ENCODE measurements at regions of chr11 and their contacts with region 1.

Region 1: DNA sequence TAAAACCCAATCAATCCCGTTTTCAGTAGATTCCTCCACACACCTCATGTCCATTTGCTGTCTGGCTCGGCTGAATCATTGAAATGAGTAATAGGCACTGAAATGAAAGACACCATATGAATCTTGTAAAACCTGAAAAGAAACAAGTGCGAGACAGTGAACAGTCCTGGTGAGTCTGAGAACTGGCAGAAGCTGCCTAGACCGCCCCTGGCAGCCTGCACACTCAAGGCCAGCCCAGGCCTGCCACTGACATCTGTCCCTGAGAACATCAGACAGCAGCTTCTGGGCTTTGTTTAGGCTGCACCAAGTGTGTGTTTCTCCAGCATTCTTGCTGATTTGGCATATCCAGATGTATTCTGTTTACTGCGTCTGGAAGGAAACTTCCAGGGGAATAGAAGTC is 44.8 kb downstream of the ENDOD1 start:
- DNase-seq: no peak
- ATAC-seq: no peak
- H3K4me3 ChIP-seq: no peak overlapping the region
- H3K4me3 Mint-ChIP-seq: no peak overlapping the region
- H3K27ac ChIP-seq: no peak overlapping the region
- H3K27ac Mint-ChIP-seq: no peak overlapping the region
- H3K4me1 ChIP-seq: no peaks in the 10 kb centered on the region
- H3K4me1 Mint-ChIP-seq: no peaks in the 10 kb centered on the region
- H3K27me3 ChIP-seq: no peaks in the 10 kb centered on the region
- H3K27me3 Mint-ChIP-seq: no peaks in the 10 kb centered on the region

Region 2: DNA sequence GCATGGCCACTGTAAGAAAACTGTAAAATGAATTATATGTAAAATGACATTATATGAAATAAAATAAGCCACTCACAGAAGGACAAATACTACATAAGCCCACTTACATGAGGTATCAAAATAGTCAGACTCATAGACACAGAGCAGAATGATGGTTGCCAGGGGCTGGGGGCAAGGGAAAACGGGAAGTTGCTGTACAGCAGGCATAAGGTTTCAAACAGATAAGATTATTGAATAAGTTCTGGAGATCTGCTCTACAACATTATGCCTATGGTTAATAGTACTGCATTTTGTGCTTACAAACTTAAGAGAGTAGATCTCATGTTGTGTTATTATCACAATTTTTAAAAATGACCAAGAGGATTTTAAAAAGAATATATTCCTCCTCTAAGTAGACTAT is 1146.0 kb before region 1 on chr11:
- CTCF ChIA-PET with region 1: no interaction called
- POLR2A ChIA-PET with region 1: no interaction called
- DNase-seq: no peak
- ATAC-seq: no peak
- H3K4me3 ChIP-seq: no peak overlapping the region
- H3K4me3 Mint-ChIP-seq: no peak overlapping the region
- H3K27ac ChIP-seq: no peak overlapping the region
- H3K27ac Mint-ChIP-seq: no peak overlapping the region
- H3K4me1 ChIP-seq: no peaks in the 10 kb centered on the region
- H3K4me1 Mint-ChIP-seq: no peaks in the 10 kb centered on the region
- H3K27me3 ChIP-seq: no peaks in the 10 kb centered on the region
- H3K27me3 Mint-ChIP-seq: peaks cover 4 to 11% of the 10 kb centered on the region in 2 donors

Region 3: GRCh38 chr11:95241681-95242081 is 107.2 kb after region 1 on chr11:
- CTCF ChIA-PET with region 1: no interaction called
- POLR2A ChIA-PET with region 1: no interaction called
- DNase-seq: no peak
- ATAC-seq: no peak
- H3K4me3 ChIP-seq: no peak overlapping the region
- H3K4me3 Mint-ChIP-seq: no peak overlapping the region
- H3K27ac ChIP-seq: no peak overlapping the region
- H3K27ac Mint-ChIP-seq: no peak overlapping the region
- H3K4me1 ChIP-seq: no peaks in the 10 kb centered on the region
- H3K4me1 Mint-ChIP-seq: peaks cover 0 to 6% (median 0%) of the 10 kb centered on the region in 3 donors
- H3K27me3 ChIP-seq: no peaks in the 10 kb centered on the region
- H3K27me3 Mint-ChIP-seq: peaks cover 2 to 3% of the 10 kb centered on the region in 2 donors

Region 4: DNA sequence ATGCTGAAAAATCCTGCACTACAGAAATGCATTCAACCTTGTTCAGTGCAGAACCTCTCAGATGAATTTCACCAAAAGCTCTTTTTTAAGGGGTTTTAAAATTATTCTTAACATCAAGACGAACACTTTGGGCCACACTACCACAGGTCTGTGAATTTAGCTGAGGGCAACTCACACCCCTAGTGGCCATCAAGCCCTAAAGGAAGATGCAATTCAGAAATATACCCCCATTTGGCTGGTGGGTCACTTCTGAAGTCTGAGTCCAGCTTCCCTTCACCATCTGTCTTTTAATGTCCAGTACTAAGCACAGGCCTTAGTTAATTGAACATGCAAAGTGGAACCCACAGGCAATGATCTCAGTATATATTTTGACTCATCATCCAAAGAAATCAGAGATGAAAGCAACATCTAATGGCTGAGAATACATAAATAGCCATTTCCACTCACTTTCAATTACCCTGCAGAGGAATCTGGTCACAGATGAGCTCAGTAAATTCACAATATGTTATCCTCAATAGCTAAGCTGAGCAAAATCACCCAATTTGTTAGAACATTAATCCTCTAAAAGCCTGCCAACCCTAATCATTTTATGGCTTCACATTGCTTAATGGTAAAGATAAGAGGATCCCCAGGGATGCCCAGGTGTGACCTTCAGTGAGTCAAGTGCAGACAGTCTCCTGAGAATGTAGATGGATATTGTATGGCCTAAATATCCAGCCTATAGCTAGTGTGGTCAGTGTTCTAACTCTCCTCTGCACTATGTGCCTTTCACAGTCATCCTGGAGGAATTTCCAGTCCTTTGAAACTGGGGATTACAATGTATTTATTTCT is 604.8 kb after region 1 on chr11:
- CTCF ChIA-PET with region 1: no interaction called
- POLR2A ChIA-PET with region 1: interaction called in 1 of 2 experiments, 15 read pairs
- DNase-seq: no peak
- ATAC-seq: no peak
- H3K4me3 ChIP-seq: no peak overlapping the region
- H3K4me3 Mint-ChIP-seq: no peak overlapping the region
- H3K27ac ChIP-seq: no peak overlapping the region
- H3K27ac Mint-ChIP-seq: no peak overlapping the region
- H3K4me1 ChIP-seq: peaks cover 0 to under 1% of the 10 kb centered on the region in 2 experiments
- H3K4me1 Mint-ChIP-seq: peaks cover 3 to 5% (median 3%) of the 10 kb centered on the region in 3 donors
- H3K27me3 ChIP-seq: no peaks in the 10 kb centered on the region
- H3K27me3 Mint-ChIP-seq: peaks cover 0 to 3% of the 10 kb centered on the region in 2 donors

Measured in T-cell (primary cell).